HCT116 (cell line): ENCODE measurements at regions of chr11 and their contacts with region 1.

Region 1: GRCh38 chr11:110190885-110191284 is 97.7 kb downstream of the ZC3H12C start:
- DNase-seq: no peak
- ATAC-seq: no peak
- H3K4me3 ChIP-seq: no peak overlapping the region
- H3K27ac ChIP-seq: no peak overlapping the region
- H3K4me1 ChIP-seq: peaks cover 24 to 32% of the 10 kb centered on the region in 2 experiments
- H3K27me3 ChIP-seq: no peaks in the 10 kb centered on the region
- CTCF ChIP-seq: no peak
- POLR2A ChIP-seq: no peak
- RAD21 ChIP-seq: no peak

Region 2: DNA sequence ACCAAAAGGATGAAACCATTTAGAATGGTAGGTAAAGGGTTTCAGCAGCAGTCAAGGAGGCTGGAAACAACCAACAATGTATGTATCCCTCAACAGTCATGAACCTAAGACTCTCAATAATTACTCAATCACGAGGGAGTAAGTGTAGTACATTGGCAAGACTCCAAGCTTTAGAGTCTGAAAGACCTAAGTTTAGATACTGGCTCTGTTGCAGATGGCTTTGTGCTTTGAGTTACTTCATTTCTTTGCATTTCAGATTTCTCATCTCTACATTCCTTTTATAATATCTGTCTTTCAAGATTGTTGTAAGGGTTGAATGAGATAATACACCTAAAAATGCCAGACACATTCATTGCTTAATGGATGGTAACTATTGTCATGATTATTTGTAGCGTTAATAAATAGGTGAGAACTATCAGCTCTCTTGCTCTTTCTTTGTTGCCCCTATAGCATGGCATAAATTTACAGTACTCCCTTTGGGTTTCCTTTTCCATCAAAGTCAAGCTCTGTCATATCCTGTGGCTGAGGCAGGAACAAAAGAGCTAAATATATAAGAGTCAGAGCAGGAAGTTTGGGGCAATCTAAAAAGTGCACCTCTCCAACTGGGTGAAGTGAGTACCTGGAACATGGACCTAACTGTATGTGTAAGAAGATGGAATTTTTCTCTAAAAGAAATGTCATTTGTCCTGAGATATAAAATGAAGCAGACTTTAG is 325.9 kb before region 1 on chr11:
- CTCF ChIA-PET with region 1: no interaction called
- POLR2A ChIA-PET with region 1: no interaction called
- RAD21 ChIA-PET with region 1: no interaction called
- intact Hi-C with region 1: loop called (anchors 5 kb)
- DNase-seq: no peak
- ATAC-seq: peak; percentile 7
- H3K4me3 ChIP-seq: no peak overlapping the region; a peak in 1 of 4 replicates
- H3K27ac ChIP-seq: peak overlapping the region; percentile 58; the same call in 1 of the 2 replicates
- H3K4me1 ChIP-seq: peaks cover 18 to 57% of the 10 kb centered on the region in 2 experiments
- H3K27me3 ChIP-seq: no peaks in the 10 kb centered on the region
- CTCF ChIP-seq: no peak
- POLR2A ChIP-seq: no peak
- RAD21 ChIP-seq: no peak

Region 3: DNA sequence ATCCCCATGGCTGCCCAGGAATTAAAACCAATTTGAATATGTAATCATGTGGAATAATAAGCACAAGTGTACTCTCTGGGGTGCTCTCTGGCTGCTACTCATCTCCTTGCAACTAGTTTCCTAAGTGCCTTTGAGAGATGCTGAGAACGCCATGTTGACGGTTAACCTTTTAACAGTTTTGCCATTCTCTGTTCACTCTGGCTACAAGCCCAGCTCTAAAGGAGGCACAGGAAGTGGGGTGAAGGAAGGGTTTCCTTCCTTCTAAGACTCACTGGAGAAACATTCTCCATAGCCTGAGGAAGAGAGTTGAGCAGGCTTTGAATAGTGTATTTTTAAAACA is 219.7 kb before region 1 on chr11:
- CTCF ChIA-PET with region 1: no interaction called
- POLR2A ChIA-PET with region 1: no interaction called
- RAD21 ChIA-PET with region 1: no interaction called
- intact Hi-C with region 1: no loop called
- DNase-seq: no peak
- ATAC-seq: no peak
- H3K4me3 ChIP-seq: no peak overlapping the region
- H3K27ac ChIP-seq: no peak overlapping the region
- H3K4me1 ChIP-seq: no peaks in the 10 kb centered on the region
- H3K27me3 ChIP-seq: no peaks in the 10 kb centered on the region
- CTCF ChIP-seq: no peak
- POLR2A ChIP-seq: no peak
- RAD21 ChIP-seq: no peak

Region 4: GRCh38 chr11:110046775-110047380 is 144.0 kb before region 1 on chr11:
- CTCF ChIA-PET with region 1: no interaction called
- POLR2A ChIA-PET with region 1: no interaction called
- RAD21 ChIA-PET with region 1: no interaction called
- intact Hi-C with region 1: no loop called
- DNase-seq: no peak
- ATAC-seq: no peak
- H3K4me3 ChIP-seq: no peak overlapping the region
- H3K27ac ChIP-seq: no peak overlapping the region
- H3K4me1 ChIP-seq: no peaks in the 10 kb centered on the region
- H3K27me3 ChIP-seq: no peaks in the 10 kb centered on the region
- CTCF ChIP-seq: no peak
- POLR2A ChIP-seq: no peak
- RAD21 ChIP-seq: no peak

Region 5: DNA sequence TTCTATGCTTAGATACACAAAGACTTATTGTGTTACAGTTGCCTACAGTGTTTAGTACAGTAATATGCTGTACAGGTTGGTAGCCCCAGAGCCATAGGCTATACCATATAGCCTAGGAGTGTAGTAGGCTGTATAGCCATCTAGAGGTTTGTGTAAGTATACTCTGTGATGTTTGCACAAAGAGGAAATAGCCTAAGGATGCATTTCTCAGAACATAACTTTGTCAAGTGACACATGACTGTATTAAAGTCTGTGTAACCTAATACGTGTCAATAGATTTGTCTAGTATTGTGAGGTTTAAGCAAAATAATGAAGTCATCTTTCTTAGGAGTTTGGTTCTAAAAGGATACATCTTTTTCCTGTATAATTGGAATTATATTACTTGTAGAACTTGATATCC is 92.2 kb before region 1 on chr11:
- CTCF ChIA-PET with region 1: no interaction called
- POLR2A ChIA-PET with region 1: no interaction called
- RAD21 ChIA-PET with region 1: no interaction called
- intact Hi-C with region 1: loop called (anchors 5 kb)
- DNase-seq: no peak
- ATAC-seq: peak; percentile 49
- H3K4me3 ChIP-seq: no peak overlapping the region
- H3K27ac ChIP-seq: no peak overlapping the region
- H3K4me1 ChIP-seq: peaks cover 17 to 28% of the 10 kb centered on the region in 2 experiments
- H3K27me3 ChIP-seq: no peaks in the 10 kb centered on the region
- CTCF ChIP-seq: no peak
- POLR2A ChIP-seq: no peak
- RAD21 ChIP-seq: no peak